ENCODE measurements at regions of chrX and their contacts with region 1.

Region 1: GRCh38 chrX:150200820-150201287 is 162.3 kb upstream of the MAMLD1 start:
- DNase-seq: peak; percentile 80
- ATAC-seq: peak; percentile 90
- H3K4me3 ChIP-seq: no peak overlapping the region
- H3K27ac ChIP-seq: no peak overlapping the region
- H3K4me1 ChIP-seq: peaks cover 7 to 17% of the 10 kb centered on the region in 2 experiments
- H3K27me3 ChIP-seq: no peaks in the 10 kb centered on the region
- CTCF ChIP-seq: no peak
- POLR2A ChIP-seq: no peak
- RAD21 ChIP-seq: peak; percentile 28

Region 2: DNA sequence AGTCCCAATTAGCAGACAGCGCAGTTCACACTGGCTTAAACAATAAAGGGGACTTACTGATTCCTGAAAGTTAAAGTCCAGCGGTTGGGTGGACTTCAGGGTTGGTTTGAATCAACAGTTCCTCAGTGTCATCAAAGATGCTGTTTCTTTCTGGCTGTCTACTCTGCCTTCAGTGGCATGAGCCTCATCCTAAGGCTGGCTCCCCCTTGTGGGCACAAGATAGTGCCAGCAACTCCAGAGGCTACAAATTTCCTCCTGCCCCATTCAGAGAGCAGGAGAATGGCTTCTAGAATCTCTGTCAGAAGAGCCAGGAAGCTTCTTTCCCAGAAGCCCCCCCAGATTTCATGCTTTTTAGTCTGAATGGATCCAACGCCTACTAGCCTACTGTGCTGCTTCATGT is 285.2 kb after region 1 on chrX:
- CTCF ChIA-PET with region 1: no interaction called
- POLR2A ChIA-PET with region 1: no interaction called
- RAD21 ChIA-PET with region 1: no interaction called
- intact Hi-C with region 1: loop called (anchors 10 kb)
- DNase-seq: peak; percentile 24
- ATAC-seq: peak; percentile 86
- H3K4me3 ChIP-seq: no peak overlapping the region
- H3K27ac ChIP-seq: no peak overlapping the region
- H3K4me1 ChIP-seq: peaks cover 3 to 16% of the 10 kb centered on the region in 2 experiments; a peak in 3 of 4 replicates
- H3K27me3 ChIP-seq: no peaks in the 10 kb centered on the region
- CTCF ChIP-seq: peak; percentile 55 to 77 (median 61)
- POLR2A ChIP-seq: no peak
- RAD21 ChIP-seq: peak; percentile 59